GM12878 (cell line): ENCODE measurements at regions of chr6 and their contacts with region 1.

Region 1: GRCh38 chr6:151014404-151015100 is 149.1 kb downstream of the MTHFD1L start:
- DNase-seq: no peak
- ATAC-seq: peak; percentile 86
- H3K4me3 ChIP-seq: no peak overlapping the region
- H3K27ac ChIP-seq: no peak overlapping the region
- H3K4me1 ChIP-seq: no peaks in the 10 kb centered on the region
- H3K27me3 ChIP-seq: no peaks in the 10 kb centered on the region
- CTCF ChIP-seq: peak; percentile 95 to 97 (median 97)
- EP300 ChIP-seq: no peak
- POLR2A ChIP-seq: no peak
- RAD21 ChIP-seq: peak; percentile 90

Region 2: DNA sequence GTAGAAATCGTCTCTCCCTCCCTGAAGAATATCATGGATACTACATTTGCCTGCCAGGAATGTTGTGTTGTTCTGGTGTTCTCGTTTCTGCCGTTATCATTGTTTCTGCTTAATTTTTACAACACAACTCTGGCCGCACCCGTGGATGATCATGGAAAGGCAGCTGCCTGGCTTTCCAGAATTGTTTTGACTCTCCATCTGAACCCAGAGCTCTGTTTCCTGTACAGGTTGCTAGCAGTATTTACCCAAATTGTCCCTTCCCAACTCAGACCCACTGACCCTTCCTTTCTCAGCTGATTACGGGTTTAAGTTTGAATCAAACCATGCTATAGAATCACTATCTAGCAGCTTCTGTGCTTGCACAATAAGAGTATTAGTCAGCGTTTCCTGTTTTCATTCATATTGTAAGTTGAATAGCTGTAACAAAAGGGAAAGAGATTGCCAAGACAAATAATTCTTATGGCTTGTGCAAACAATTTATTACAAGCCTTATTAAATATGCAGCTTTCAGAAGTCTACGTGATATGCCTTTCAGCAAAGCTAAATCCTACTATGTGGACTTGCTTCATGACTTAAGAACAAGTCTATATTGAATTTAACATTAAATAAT is 10.0 kb before region 1 on chr6:
- CTCF ChIA-PET with region 1: interaction called, 28 read pairs
- POLR2A ChIA-PET with region 1: no interaction called
- RAD21 ChIA-PET with region 1: interaction called, 5 read pairs
- SMC1A ChIA-PET with region 1: interaction called, 9 read pairs
- in situ Hi-C with region 1: no loop called
- intact Hi-C with region 1: no loop called
- DNase-seq: no peak
- ATAC-seq: no peak; the same call in 2 of the 3 replicates
- H3K4me3 ChIP-seq: no peak overlapping the region
- H3K27ac ChIP-seq: no peak overlapping the region
- H3K4me1 ChIP-seq: peaks cover 14% of the 10 kb centered on the region
- H3K27me3 ChIP-seq: no peaks in the 10 kb centered on the region
- CTCF ChIP-seq: no peak
- EP300 ChIP-seq: no peak
- POLR2A ChIP-seq: no peak
- RAD21 ChIP-seq: no peak

Region 3: DNA sequence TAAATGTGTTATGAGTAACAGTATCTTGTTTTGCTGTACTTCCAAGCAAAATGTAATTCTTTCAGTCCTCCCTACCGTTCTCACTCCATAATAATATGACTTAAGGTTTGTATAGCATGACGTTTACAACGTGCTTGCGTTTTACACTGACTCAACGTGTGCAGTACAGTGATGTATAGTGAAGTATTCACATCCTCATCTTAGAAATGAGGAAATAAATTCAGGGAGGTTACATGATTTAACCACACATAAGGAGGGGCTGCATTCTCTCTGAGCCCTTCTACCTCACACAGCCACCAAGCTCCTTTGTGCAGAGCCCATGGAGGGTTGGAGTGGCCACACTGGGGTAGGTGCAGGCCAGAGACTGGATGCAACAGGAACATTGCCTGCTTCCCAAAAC is 15.4 kb after region 1 on chr6:
- CTCF ChIA-PET with region 1: interaction called, 20 read pairs
- POLR2A ChIA-PET with region 1: interaction called, 3 read pairs
- RAD21 ChIA-PET with region 1: no interaction called
- SMC1A ChIA-PET with region 1: interaction called, 3 read pairs
- in situ Hi-C with region 1: no loop called
- intact Hi-C with region 1: no loop called
- DNase-seq: no peak
- ATAC-seq: no peak
- H3K4me3 ChIP-seq: no peak overlapping the region
- H3K27ac ChIP-seq: no peak overlapping the region
- H3K4me1 ChIP-seq: no peaks in the 10 kb centered on the region
- H3K27me3 ChIP-seq: no peaks in the 10 kb centered on the region
- CTCF ChIP-seq: no peak
- EP300 ChIP-seq: no peak
- POLR2A ChIP-seq: no peak
- RAD21 ChIP-seq: no peak

Region 4: DNA sequence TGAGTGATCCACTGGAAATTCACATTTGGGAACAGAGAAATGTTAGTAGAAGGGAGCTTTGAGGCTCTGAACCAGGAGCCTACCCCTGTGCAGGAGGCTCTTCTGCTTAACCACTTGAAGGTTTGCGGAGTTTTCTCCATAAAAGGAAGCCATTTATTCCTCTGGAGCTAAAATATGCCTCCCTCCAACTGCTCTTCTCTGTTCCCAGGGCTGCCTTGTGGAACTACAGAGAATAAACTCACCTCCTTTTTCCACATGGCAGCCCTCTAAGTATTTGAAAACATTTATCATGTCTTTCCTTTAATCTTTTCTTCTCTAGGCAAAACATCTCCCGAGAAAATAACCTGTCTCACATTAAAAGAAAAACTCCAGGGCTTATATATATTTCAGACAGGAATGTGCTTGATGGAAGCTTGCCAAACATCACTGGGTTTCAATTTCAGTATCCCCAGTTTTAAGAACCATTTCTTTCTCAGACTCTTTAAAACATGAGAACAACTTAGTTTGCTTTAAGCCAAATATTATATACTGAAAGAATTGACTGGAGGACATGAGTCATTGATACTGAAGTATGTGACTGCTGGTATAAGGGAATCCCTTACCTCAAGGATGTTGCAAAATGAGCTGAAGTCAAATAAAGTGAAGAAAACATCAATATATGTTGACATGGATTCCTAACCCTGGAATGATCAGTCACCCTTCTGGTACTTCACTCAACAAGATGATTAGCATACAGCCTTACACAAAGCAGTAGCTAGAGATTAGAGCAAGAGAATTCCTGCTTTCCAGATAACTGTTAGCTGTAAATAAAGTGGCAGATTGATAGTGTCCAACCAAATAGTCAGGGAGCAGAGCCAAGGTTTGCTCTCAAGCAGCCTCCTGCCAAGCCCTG is 302.8 kb after region 1 on chr6:
- CTCF ChIA-PET with region 1: interaction called, 259 read pairs
- POLR2A ChIA-PET with region 1: interaction called, 5 read pairs
- RAD21 ChIA-PET with region 1: interaction called, 5 read pairs
- SMC1A ChIA-PET with region 1: interaction called, 128 read pairs
- in situ Hi-C with region 1: loop called (anchors 5 kb)
- intact Hi-C with region 1: no loop called
- DNase-seq: no peak
- ATAC-seq: no peak
- H3K4me3 ChIP-seq: no peak overlapping the region
- H3K27ac ChIP-seq: no peak overlapping the region
- H3K4me1 ChIP-seq: no peaks in the 10 kb centered on the region
- H3K27me3 ChIP-seq: no peaks in the 10 kb centered on the region; a peak in 1 of 4 replicates
- CTCF ChIP-seq: no peak
- EP300 ChIP-seq: no peak
- POLR2A ChIP-seq: no peak
- RAD21 ChIP-seq: no peak

Region 5: GRCh38 chr6:151335930-151336329 is 321.4 kb after region 1 on chr6:
- CTCF ChIA-PET with region 1: interaction called, 58 read pairs
- POLR2A ChIA-PET with region 1: no interaction called
- RAD21 ChIA-PET with region 1: interaction called, 21 read pairs
- SMC1A ChIA-PET with region 1: interaction called, 18 read pairs
- in situ Hi-C with region 1: no loop called
- intact Hi-C with region 1: no loop called
- DNase-seq: no peak
- ATAC-seq: no peak
- H3K4me3 ChIP-seq: no peak overlapping the region
- H3K27ac ChIP-seq: no peak overlapping the region
- H3K4me1 ChIP-seq: no peaks in the 10 kb centered on the region
- H3K27me3 ChIP-seq: no peaks in the 10 kb centered on the region
- CTCF ChIP-seq: no peak
- EP300 ChIP-seq: no peak
- POLR2A ChIP-seq: no peak
- RAD21 ChIP-seq: no peak